ENCODE measurements at regions of chr2 and their contacts with region 1.

Region 1: DNA sequence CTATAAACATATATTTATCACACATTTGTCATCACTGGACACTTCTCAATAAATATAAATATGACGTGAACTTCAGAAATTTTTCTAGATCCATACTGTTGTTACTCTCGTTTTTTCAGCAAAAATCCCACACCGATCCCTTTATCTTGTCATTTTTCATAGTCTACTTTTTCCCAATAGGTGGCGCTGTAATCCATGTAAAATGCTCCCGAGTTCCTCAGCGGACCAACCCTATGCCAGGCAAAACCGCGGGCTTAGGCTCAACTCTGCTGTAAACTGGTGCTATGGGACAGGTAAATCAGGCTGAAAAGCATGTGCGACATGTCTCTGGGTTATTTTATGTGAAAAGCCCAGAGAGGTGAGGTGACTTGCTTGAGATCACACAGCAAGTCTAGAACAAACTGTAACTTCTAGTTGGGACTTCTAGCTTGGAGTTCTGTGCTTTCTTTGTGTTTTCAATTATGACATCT is 104.0 kb downstream of the COBLL1 start:
- DNase-seq: peak; percentile 50
- ATAC-seq: peak; percentile 71 to 78

Region 2: GRCh38 chr2:164323978-164324377 is 413.7 kb before region 1 on chr2:
- intact Hi-C with region 1: no loop called
- DNase-seq: no peak
- ATAC-seq: no peak

Region 3: GRCh38 chr2:164859251-164859800 is 121.7 kb after region 1 on chr2:
- intact Hi-C with region 1: no loop called
- DNase-seq: no peak
- ATAC-seq: no peak

Region 4: DNA sequence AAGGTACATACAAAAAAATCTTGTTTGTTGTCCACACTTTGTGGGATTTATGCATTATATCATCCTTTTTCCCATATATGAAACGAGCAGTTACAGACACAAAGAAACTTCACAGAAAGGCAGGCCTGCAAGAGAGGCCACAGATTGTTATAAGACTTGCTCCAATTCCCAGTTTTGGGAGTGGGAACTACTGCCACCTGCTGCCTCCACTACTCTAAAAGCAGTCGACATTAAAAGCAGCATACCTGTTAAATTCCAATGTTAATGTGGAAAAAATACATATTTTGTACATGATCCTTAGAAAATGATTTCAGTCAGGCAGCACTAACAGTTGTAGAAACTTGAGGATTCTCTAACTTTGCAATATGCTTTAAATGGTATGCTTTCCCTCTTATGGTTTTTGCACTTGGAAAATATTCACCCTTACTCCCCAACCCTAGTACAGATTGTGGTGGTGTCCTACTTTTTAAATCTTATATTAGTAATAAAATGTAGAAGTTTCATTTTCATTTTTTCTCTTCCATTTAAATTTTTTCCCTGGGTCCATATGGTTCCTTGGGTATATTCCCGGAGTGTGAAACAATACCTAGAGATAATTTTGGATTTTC is 179.8 kb after region 1 on chr2:
- intact Hi-C with region 1: loop called (anchors 2 kb)
- DNase-seq: peak; percentile 24
- ATAC-seq: peak; percentile 57 to 59

Region 5: GRCh38 chr2:165268754-165269153 is 531.1 kb after region 1 on chr2:
- intact Hi-C with region 1: no loop called
- DNase-seq: no peak
- ATAC-seq: no peak